ENCODE measurements at regions of chr17 and their contacts with region 1.

Region 1: GRCh38 chr17:9792181-9792840 is 919 bp upstream of the DHRS7C start:
- DNase-seq: no peak
- ATAC-seq: no peak
- H3K4me3 ChIP-seq: no peak overlapping the region
- H3K27ac ChIP-seq: no peak overlapping the region
- H3K4me1 ChIP-seq: no peaks in the 10 kb centered on the region
- H3K27me3 ChIP-seq: peaks cover 0 to 13% of the 10 kb centered on the region in 2 donors
- CTCF ChIP-seq: no peak

Region 2: GRCh38 chr17:9811086-9811485 is 18.8 kb after region 1 on chr17:
- intact Hi-C with region 1: loop called in 1 of 2 experiments (anchors 2 kb)
- DNase-seq: no peak
- ATAC-seq: no peak
- H3K4me3 ChIP-seq: no peak overlapping the region
- H3K27ac ChIP-seq: no peak overlapping the region
- H3K4me1 ChIP-seq: no peaks in the 10 kb centered on the region
- H3K27me3 ChIP-seq: peaks cover 0 to 16% of the 10 kb centered on the region in 2 donors
- CTCF ChIP-seq: no peak